Prostate gland (tissue), 2 donors: ENCODE measurements at regions of chr3 and their contacts with region 1.

Region 1: GRCh38 chr3:49539659-49540560 is 14.4 kb upstream of the BSN start:
- DNase-seq: peak; percentile 93
- H3K4me3 ChIP-seq: peak overlapping the region; percentile 32 to 37
- H3K27ac ChIP-seq: peak overlapping the region; percentile 65 to 78
- H3K4me1 ChIP-seq: no peaks in the 10 kb centered on the region
- H3K27me3 ChIP-seq: no peaks in the 10 kb centered on the region
- CTCF ChIP-seq: peak; percentile 70 to 97 (median 93)
- POLR2A ChIP-seq: peak; percentile 51

Region 2: DNA sequence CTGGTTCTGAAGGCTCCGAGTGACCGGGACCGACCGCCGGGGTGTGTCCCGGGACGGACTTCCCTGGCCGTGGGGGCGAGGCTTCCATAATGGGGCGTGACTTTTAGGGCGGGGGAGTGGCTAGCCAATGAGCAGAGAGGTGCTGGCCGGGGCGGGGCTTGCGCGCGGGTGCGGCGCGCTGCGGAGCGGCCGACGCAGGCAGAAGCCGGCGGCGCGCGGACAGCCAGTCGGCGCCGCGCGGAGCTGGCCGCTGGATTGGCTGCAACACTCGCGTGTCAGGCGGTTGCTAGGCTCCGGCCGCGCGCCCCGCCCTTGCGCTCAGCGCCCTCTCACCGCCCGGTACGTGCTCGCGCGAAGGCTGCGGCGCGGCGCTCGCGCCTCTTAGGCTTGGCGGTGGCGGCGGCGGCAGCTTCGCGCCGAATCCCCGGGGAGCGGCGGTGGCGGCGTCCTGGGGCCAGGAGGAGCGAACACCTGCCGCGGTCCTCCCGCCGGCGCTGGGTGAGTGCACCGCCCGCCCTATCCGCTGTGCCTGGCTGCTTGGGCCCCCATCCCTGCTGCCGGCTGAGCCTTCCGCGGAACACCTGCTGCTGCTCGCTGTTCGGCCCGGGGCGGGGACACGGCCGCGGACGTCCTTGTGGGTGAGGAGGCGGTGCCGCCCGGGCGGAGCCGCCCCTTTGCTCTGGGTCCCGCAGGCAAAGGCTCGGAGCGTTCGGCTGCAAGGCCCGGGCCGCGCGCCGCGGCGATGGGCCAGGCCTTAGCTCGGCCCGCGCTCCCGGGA is 69.8 kb before region 1 on chr3 and contains the start of gene DAG1:
- intact Hi-C with region 1: loop called (anchors 2 kb)
- DNase-seq: peak; percentile 97
- H3K4me3 ChIP-seq: peak within 1 kb of the TSS; percentile 78 to 82
- H3K27ac ChIP-seq: peak within 1 kb of the TSS; percentile 95 to 98
- H3K4me1 ChIP-seq: peaks cover 18% of the 10 kb centered on the region
- H3K27me3 ChIP-seq: no peaks in the 10 kb centered on the region
- CTCF ChIP-seq: peak in 1 of 4 experiments; percentile 4
- POLR2A ChIP-seq: peak; percentile 67
- total RNA-seq, gene DAG1: 86.7 to 213 TPM

Region 3: GRCh38 chr3:49671291-49672288 is 131.7 kb after region 1 on chr3:
- intact Hi-C with region 1: loop called (anchors 1 kb)
- DNase-seq: peak; percentile 64
- H3K4me3 ChIP-seq: no peak overlapping the region
- H3K27ac ChIP-seq: no peak overlapping the region
- H3K4me1 ChIP-seq: peaks cover 6% of the 10 kb centered on the region
- H3K27me3 ChIP-seq: no peaks in the 10 kb centered on the region
- CTCF ChIP-seq: peak; percentile 18 to 89 (median 72)
- POLR2A ChIP-seq: no peak

Region 4: GRCh38 chr3:49747792-49748480 is 208.0 kb after region 1 on chr3:
- intact Hi-C with region 1: no loop called
- DNase-seq: no peak
- H3K4me3 ChIP-seq: no peak overlapping the region
- H3K27ac ChIP-seq: no peak overlapping the region
- H3K4me1 ChIP-seq: no peaks in the 10 kb centered on the region
- H3K27me3 ChIP-seq: no peaks in the 10 kb centered on the region
- CTCF ChIP-seq: no peak
- POLR2A ChIP-seq: no peak